ENCODE measurements at regions of chr20 and their contacts with region 1.

Region 1: GRCh38 chr20:25382704-25383565 is 7.7 kb downstream of the ABHD12 start:
- DNase-seq: no peak
- ATAC-seq: no peak
- H3K4me3 ChIP-seq: no peak overlapping the region
- H3K27ac ChIP-seq: no peak overlapping the region
- H3K4me1 ChIP-seq: no peaks in the 10 kb centered on the region
- H3K27me3 ChIP-seq: no peaks in the 10 kb centered on the region
- CTCF ChIP-seq: no peak

Region 2: GRCh38 chr20:25299806-25300205 is 83.1 kb before region 1 on chr20:
- intact Hi-C with region 1: no loop called
- DNase-seq: no peak
- ATAC-seq: no peak
- H3K4me3 ChIP-seq: no peak overlapping the region
- H3K27ac ChIP-seq: no peak overlapping the region
- H3K4me1 ChIP-seq: peaks cover 19% of the 10 kb centered on the region
- H3K27me3 ChIP-seq: no peaks in the 10 kb centered on the region
- CTCF ChIP-seq: no peak

Region 3: GRCh38 chr20:25310268-25310920 is 72.5 kb before region 1 on chr20:
- intact Hi-C with region 1: loop called in 1 of 2 experiments (anchors 5 kb)
- DNase-seq: no peak
- ATAC-seq: peak; percentile 85 to 87 (median 86)
- H3K4me3 ChIP-seq: peak overlapping the region; percentile 6
- H3K27ac ChIP-seq: peak overlapping the region; percentile 78
- H3K4me1 ChIP-seq: peaks cover 22% of the 10 kb centered on the region
- H3K27me3 ChIP-seq: no peaks in the 10 kb centered on the region
- CTCF ChIP-seq: peak; percentile 20